ENCODE measurements at regions of chr12 and their contacts with region 1.

Region 1: DNA sequence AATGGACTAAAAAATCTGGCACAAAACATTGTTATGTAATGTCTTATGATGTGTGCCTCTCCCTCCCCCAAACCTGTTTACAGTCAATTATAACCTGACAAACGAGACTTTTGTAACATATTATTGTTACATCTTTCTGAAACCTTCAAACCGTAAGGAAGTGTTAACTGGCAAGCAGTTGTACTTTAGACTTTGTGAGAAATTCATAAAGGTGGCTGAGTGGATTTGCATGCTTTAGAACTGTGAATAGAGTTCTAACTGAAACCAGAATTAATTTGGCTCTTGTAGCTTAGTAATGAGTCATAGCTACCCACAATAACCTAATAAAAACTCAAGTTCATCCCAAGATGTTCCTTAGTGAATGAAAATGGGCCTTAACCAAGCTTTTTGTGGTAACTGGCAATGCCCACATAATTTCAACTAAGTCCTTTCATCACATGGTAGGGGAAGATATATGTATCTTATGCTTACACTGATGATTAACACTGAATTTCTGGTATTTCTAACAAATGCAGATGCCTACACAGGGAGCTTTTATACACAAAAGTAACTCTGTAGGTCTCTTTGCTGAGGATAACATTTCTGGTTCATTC is 29.7 kb downstream of the RAD9B start:
- DNase-seq: no peak
- H3K4me3 ChIP-seq: no peak overlapping the region
- H3K27ac ChIP-seq: no peak overlapping the region
- H3K27me3 ChIP-seq: no peaks in the 10 kb centered on the region
- CTCF ChIP-seq: no peak

Region 2: DNA sequence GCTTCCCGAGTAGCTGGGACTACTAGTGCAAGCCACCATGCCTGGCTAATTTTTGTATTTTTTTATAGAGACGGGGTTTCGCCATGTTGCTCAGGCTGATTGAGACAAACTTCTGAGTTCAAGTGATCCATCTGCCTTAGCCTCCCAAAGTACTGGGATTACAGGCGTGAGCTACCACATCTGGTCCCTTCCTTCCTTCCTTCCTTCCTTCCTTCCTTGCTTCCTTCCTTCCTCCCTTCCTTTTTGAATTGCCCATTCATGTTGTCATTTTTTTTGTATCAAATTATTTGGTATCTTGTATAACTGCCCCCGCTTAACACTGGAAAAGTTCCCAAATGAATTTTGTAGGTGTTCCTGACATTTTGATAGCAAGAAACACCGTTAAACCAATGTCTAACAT is 18.0 kb before region 1 on chr12:
- CTCF ChIA-PET with region 1: interaction called, 16 read pairs
- POLR2A ChIA-PET with region 1: no interaction called
- DNase-seq: no peak
- H3K4me3 ChIP-seq: no peak overlapping the region
- H3K27ac ChIP-seq: no peak overlapping the region
- H3K27me3 ChIP-seq: peaks cover 3% of the 10 kb centered on the region
- CTCF ChIP-seq: no peak

Measured in AG04450 (cell line).